ENCODE measurements at regions of chr19 and their contacts with region 1.

Region 1: DNA sequence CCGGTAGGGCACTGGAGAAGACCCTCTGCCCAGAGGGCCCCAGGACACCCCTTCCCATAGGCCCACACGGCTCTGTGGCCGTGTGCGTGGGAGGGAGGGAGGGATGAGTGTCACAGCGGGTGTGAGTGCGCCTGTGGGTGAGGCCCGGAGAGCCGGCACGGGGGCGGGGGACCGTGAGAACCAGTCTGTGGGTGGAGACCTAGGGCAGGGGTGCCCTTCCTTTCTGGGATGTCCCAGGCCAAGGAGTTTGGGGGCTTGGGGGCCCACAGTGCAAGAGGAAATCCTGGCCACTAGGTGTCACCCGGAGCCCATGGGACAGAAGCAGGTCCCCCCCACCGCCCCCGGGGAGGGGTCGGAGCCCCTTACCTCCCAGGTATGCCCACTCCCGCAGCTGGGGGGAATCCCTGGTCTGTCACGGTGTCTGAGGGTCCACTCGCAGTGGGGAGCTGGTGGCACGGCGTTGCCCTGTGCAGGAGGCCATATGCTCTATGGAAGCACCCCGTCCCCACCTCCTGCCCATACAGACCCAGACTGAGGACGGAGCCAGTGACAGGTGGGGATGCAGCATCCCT is 16.0 kb upstream of the SLC7A10 start:
- DNase-seq: no peak
- H3K4me3 ChIP-seq: no peak overlapping the region
- H3K27ac ChIP-seq: no peak overlapping the region
- H3K27me3 ChIP-seq: peaks cover 13% of the 10 kb centered on the region
- CTCF ChIP-seq: peak; percentile 56

Region 2: DNA sequence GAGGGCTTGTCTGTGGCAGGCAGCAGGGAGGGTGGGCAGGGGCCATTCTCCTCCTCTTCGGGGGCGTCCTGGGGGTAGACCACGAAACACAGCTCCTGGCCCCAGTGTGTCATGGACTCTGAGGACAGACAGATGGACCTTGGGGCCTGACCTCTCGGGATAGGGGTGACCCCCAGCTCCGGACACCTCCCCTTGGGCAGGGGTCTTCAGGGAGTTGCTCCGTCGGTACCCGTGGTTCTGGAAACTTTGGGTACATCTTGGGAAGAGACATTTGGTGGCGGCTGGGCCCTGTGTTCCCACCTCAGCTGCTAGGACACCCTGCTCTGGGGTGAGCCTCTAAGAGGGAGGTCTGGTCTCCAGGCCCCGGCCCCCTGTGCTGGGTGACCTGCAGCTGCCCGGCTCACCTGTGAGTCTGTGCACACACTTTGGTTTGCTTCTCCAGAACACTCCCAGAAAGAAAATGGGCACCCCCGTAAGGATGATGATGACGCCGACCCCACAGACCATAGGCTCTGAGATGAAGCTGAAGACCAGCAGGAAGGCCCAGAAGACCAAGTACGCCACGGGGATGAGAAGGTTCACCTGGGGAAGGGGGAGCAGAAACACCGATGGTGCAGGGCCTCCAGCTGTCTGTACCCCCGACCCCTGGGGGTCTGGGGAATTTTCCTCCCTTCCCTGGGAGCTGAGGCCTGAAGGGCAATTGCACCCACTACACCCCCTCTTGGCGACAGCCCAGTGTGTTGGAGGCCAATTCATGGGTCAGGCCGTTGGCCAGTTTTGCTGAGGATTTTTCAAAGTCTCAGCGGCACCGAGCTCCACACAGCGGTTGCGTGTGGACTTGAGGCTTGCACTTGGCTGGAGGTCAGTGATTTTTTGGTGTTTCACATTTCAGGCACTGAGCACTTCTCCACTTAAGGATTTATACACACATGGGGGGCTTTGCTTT is 32.4 kb before region 1 on chr19:
- CTCF ChIA-PET with region 1: no interaction called
- POLR2A ChIA-PET with region 1: no interaction called
- DNase-seq: no peak
- H3K4me3 ChIP-seq: no peak overlapping the region
- H3K27ac ChIP-seq: no peak overlapping the region
- H3K27me3 ChIP-seq: no peaks in the 10 kb centered on the region
- CTCF ChIP-seq: no peak

Region 3: DNA sequence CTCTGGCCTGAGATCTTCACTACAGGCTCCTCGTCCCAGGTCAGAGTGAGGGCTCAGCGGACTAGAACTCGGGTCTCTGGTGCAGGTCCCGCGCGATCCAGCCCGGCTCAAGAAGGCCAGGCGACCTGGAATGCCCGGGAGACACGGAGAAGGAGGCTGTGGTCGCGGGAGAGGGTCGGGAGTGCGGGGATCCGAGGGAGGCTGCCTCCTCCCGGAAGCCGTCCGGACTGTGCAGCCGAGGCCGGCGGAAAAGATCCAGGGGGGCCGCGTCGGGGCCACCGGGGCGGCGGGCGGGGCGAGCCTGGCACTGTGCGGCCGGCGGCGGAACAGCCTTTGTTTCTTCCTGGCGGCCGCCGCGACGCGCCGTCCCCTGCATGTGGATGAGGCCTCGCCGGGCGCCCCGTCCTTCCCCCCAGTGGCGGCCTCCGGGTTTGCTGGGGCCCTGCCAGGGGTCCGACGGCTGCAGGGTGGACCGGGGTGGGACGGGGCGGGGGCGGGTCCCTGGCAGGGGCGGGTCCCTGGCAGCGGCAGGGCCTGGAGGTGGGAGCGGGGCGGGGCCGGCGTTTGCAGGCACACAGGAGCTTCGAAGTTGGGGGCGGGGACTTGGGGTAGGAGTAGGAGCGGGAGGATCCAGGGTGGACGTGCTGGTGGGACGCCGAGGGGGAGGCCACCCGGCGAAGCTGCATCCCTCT is 14.9 kb before region 1 on chr19:
- CTCF ChIA-PET with region 1: no interaction called
- POLR2A ChIA-PET with region 1: no interaction called
- DNase-seq: no peak
- H3K4me3 ChIP-seq: no peak overlapping the region
- H3K27ac ChIP-seq: no peak overlapping the region
- H3K27me3 ChIP-seq: peaks cover 50% of the 10 kb centered on the region
- CTCF ChIP-seq: no peak

Region 4: GRCh38 chr19:33252971-33253370 is 11.4 kb after region 1 on chr19:
- CTCF ChIA-PET with region 1: no interaction called
- POLR2A ChIA-PET with region 1: no interaction called
- DNase-seq: no peak
- H3K4me3 ChIP-seq: no peak overlapping the region
- H3K27ac ChIP-seq: no peak overlapping the region
- H3K27me3 ChIP-seq: no peaks in the 10 kb centered on the region
- CTCF ChIP-seq: no peak

Region 5: DNA sequence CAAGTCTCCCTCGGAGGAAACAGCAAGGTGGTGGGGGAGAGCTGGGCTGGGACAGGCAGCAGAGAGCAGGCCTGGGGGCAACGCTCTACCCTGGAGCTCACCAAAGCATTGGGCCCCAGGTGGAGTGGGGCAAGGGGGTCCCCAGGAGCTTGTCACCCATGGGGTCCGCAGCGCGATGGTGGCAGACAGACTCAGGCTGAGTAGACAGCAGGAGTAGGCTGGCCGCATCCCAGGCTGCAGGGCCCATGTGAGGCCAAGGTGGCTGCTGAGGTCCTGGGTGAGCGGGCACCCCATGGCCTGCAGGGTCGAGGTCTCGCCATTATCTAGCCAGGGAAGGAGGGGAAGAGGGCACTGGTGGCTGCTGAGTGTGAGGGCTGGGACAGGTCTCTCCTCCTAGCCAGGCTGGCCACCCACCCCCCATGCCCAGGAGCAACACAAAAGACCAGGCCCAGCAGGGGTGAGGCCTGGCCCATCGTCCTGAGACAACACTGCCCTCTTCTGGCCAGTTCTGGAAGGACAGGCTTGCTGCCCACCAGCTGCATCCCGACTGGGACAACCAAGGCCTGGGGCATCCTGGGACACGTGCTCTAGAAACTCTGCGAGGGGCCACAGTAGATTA is 165.0 kb after region 1 on chr19:
- CTCF ChIA-PET with region 1: interaction called, 54 read pairs
- POLR2A ChIA-PET with region 1: no interaction called
- DNase-seq: no peak
- H3K4me3 ChIP-seq: no peak overlapping the region
- H3K27ac ChIP-seq: no peak overlapping the region
- H3K27me3 ChIP-seq: no peaks in the 10 kb centered on the region
- CTCF ChIP-seq: peak; percentile 88